ENCODE measurements at regions of chrX and their contacts with region 1.

Region 1: DNA sequence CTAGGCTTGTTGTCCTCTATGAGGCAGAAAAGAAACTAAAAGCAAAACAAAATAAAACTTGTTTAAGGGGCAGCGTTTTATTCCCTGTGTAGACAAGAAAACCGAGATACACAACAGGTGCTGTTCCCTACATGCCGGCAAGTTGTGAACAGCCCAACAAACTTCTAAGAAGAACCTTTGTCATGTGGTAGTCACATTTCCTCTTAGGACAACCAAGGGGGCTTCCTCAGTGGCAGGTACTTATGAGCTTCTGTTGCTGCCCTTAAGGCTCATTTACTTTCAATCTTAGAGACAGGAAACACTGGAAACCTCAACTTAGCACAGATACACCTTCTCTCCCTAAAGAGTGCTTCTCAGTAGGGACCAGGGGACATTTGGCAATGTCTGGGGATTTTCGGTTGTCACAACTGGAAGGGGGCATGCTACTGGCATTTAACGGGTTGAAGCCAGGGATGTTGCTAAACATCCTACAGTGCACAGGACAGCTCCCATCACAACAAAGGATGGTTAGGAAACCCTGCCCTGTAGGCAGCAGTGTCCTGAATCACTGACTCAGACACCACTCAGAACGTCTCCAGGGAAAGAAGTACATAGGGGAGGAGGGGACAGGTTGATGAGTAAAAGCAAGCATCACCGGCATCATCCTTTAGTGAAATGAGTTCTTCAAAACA is 111.0 kb downstream of the ASB9 start:
- DNase-seq: peak in 4 of 5 donors; percentile 16 to 42 (median 35)
- H3K4me3 ChIP-seq: peak overlapping the region; percentile 9 to 41
- H3K4me3 Mint-ChIP-seq: peak overlapping the region; percentile 73 to 93 (median 86)
- H3K27ac ChIP-seq: peak overlapping the region; percentile 54
- H3K27ac Mint-ChIP-seq: peak overlapping the region; percentile 85 to 94 (median 90)
- H3K4me1 ChIP-seq: peaks cover 35% of the 10 kb centered on the region
- H3K4me1 Mint-ChIP-seq: peaks cover 21 to 54% (median 34%) of the 10 kb centered on the region in 4 donors
- H3K27me3 ChIP-seq: no peaks in the 10 kb centered on the region
- H3K27me3 Mint-ChIP-seq: no peaks in the 10 kb centered on the region

Region 2: DNA sequence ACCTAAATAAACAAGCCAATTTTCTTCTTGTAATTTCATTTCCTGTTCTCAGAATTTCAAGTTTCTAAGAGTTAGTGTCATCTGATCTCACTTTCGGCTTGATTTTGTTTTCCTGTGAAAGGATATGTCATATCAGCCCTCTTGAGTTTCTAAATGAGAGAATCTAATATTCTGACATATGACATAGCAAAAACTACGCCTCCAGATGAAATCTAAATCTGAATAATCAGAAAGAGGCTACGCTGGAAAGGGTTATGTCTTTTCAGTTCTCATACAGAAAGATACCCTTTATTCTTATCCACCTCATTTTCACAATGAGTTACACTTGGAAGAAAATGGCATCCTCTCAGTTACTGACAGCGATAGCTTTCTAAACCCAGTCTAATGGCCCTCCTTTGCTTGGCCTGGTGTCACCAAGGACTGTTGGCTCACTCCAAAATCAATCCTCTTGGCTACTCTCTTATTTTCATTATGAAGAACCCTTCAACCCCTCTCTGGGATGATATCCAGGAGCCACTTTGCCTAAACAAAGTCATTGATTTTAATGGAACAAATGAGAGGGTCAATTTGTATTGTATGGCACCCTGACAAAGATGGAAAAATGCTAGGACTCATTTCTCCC is 45.4 kb after region 1 on chrX:
- CTCF ChIA-PET with region 1: no interaction called
- POLR2A ChIA-PET with region 1: interaction called, 3 read pairs
- intact Hi-C with region 1: loop called (anchors 2 kb)
- DNase-seq: no peak
- H3K4me3 ChIP-seq: no peak overlapping the region
- H3K4me3 Mint-ChIP-seq: peak overlapping the region in 7 of 8 donors; percentile 5 to 63 (median 12)
- H3K27ac ChIP-seq: peak overlapping the region; percentile 26
- H3K27ac Mint-ChIP-seq: peak overlapping the region; percentile 0 to 86 (median 67)
- H3K4me1 ChIP-seq: peaks cover 41% of the 10 kb centered on the region
- H3K4me1 Mint-ChIP-seq: peaks cover 31 to 59% (median 40%) of the 10 kb centered on the region in 4 donors
- H3K27me3 ChIP-seq: no peaks in the 10 kb centered on the region
- H3K27me3 Mint-ChIP-seq: no peaks in the 10 kb centered on the region

Measured in CD4-positive, alpha-beta memory T cell (primary cell).